Right cardiac atrium (tissue), 5 donors: ENCODE measurements at regions of chr11 and their contacts with region 1.

Region 1: DNA sequence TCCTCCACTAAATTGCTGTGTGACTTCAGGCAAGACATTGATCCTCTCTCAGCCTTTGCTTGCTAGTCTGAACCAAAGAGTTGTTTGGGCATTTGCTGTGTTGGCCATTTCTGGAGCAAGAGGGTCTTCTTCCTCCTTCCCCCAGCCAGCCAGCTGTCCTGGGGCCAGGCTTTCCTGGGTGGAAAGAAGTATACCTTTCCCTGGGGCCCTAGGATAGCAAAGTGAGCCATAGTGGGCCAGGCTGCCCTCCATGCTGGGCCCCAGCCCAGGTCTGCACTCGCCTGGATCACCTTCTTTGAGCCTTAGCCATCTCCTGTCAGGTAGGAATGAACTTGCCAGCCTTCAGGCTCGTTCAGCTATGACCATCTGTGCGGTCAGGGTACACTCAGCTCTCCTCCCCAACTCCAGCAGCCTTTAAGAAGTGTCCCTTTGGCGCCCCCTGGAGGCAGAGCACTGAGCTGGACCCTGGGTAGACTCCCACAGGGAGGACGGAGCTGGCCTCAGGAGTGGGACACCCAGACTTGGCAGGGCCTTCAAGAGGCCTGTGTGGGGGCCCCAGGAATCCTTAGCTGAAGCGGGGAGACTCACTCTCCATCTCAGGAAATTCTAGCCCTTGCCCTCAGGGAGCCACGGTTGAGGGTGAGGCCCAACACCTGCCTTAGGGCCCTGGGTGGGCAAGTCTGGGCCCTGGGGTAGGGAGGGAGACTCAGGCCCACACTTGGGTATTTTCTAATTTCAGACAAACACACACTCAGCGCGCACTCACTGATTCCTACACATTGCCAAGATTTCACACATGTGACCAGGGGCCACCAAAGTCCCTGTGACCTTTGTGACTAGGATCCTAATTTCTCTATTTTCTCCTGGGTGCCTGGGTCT is 35.6 kb upstream of the TPBGL start:
- DNase-seq: peak; percentile 89 to 97 (median 95)
- ATAC-seq: peak; percentile 91 to 93
- H3K4me3 ChIP-seq: no peak overlapping the region
- H3K27ac ChIP-seq: no peak overlapping the region
- H3K4me1 ChIP-seq: no peaks in the 10 kb centered on the region
- H3K27me3 ChIP-seq: no peaks in the 10 kb centered on the region

Region 2: GRCh38 chr11:75142714-75143419 is 62.1 kb before region 1 on chr11:
- intact Hi-C with region 1: loop called (anchors 1 to 2 kb)
- DNase-seq: peak; percentile 80 to 90 (median 87)
- ATAC-seq: peak; percentile 85 to 95
- H3K4me3 ChIP-seq: no peak overlapping the region
- H3K27ac ChIP-seq: no peak overlapping the region
- H3K4me1 ChIP-seq: peaks cover 3% of the 10 kb centered on the region
- H3K27me3 ChIP-seq: no peaks in the 10 kb centered on the region

Region 3: DNA sequence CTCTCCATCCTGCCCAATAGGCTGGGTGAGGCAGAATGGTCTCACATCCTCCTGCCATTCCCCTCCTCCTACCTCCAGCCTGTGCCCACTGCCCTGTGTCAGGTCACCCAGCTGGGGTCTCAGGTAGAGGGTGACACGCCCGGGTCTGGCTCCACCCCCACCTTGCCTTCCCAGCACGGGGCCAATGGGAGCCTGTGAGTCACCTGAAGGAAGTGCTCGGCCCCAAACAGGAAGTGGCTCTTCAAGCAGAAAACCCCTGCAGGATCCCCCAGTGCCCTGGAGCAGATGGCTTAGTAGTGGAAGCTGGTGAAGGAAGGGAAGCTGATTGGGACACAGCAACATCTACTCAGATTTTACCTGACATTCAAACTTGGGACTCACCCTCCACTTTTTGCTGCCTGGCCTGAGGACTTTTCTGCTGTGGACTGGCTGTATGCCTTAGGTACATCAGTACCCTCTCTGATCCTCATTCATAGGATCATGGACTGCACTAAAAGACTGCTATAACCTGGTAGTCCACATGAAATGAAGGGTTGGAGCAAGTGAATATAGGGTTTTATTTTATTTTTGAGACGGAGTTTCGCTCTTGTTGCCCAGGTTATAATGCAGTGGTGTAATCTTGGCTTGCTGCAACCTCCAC is 287.4 kb after region 1 on chr11:
- intact Hi-C with region 1: no loop called
- DNase-seq: no peak
- ATAC-seq: peak in 1 of 2 donors; percentile 18
- H3K4me3 ChIP-seq: no peak overlapping the region
- H3K27ac ChIP-seq: no peak overlapping the region
- H3K4me1 ChIP-seq: peaks cover 3% of the 10 kb centered on the region
- H3K27me3 ChIP-seq: no peaks in the 10 kb centered on the region